MCF 10A (cell line): ENCODE measurements at regions of chr10 and their contacts with region 1.

Region 1: DNA sequence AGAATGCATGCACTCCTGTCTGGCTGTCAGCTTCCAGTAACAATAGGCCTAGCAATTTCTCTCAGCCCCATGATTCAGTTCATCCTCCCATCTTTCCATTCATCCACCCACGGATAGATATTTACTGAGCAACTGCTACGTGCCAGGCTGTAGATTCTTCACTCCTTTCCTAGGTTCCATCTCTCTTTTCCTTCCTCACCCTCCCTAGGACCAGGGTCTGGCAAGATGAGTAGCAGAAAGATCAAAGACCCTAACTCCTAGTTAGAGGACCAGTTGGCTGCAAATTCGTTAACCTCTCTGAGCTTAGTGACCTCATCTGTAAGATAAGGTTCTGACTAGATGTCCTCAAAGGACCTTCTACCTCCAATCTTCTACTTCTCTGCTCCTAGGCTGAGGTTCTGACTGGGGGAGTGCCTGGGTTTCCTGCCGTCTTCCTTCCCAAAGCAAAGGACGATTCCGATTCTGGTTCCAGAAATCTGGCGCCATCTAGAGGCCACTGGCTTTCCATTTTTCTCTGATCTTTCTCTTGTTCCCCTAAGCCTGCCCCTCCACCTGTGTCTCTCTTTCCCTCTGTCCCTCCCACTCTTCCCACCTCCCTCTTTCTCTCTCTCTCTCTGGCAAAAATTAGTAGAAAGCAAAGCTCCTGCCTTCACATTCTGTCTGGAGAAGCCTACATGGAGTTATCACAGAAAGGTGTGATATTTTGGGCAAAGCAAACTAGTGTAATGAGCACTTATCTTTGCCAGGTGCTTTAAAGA is 26.2 kb downstream of the TBATA start:
- DNase-seq: peak; percentile 82
- H3K4me3 Mint-ChIP-seq: no peak overlapping the region
- H3K27ac Mint-ChIP-seq: no peak overlapping the region
- H3K4me1 Mint-ChIP-seq: peaks cover 24% of the 10 kb centered on the region
- H3K27me3 Mint-ChIP-seq: no peaks in the 10 kb centered on the region
- CTCF ChIP-seq: peak; percentile 66

Region 2: DNA sequence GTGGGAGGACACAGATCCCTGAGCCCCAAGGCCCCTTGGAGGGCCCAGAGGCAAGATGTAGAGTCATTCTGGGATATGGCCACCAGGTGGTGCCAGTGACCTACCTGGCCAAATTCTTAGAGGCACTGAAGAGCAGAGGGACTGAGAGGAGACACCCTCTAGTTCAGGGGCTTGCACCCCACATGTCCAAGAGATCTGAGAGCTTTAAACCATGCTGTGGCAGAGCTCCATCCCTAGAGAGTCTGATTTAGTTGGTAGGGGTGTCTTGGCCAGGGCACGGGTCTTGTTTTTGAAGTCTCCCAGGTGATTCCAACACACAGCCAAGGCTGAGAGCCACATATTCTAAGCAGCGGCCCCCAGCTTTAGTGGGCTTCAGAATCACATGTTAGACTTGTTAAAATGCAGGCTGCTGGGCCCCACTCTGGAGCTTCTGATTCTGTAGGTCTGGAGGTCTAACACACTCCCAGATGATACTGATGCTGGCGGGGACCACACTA is 208.9 kb before region 1 on chr10:
- CTCF ChIA-PET with region 1: interaction called, 95 read pairs
- POLR2A ChIA-PET with region 1: interaction called, 3 read pairs
- intact Hi-C with region 1: loop called (anchors 1 kb)
- DNase-seq: peak; percentile 75
- H3K4me3 Mint-ChIP-seq: no peak overlapping the region
- H3K27ac Mint-ChIP-seq: no peak overlapping the region
- H3K4me1 Mint-ChIP-seq: no peaks in the 10 kb centered on the region
- H3K27me3 Mint-ChIP-seq: peaks cover 22% of the 10 kb centered on the region
- CTCF ChIP-seq: peak; percentile 87

Region 3: GRCh38 chr10:70619271-70620019 is 139.5 kb before region 1 on chr10:
- CTCF ChIA-PET with region 1: interaction called, 6 read pairs
- POLR2A ChIA-PET with region 1: no interaction called
- intact Hi-C with region 1: loop called (anchors 1 kb)
- DNase-seq: peak; percentile 54
- H3K4me3 Mint-ChIP-seq: no peak overlapping the region
- H3K27ac Mint-ChIP-seq: no peak overlapping the region
- H3K4me1 Mint-ChIP-seq: peaks cover 10% of the 10 kb centered on the region
- H3K27me3 Mint-ChIP-seq: no peaks in the 10 kb centered on the region
- CTCF ChIP-seq: peak; percentile 48

Region 4: GRCh38 chr10:70693619-70694335 is 65.2 kb before region 1 on chr10:
- CTCF ChIA-PET with region 1: interaction called, 5 read pairs
- POLR2A ChIA-PET with region 1: no interaction called
- intact Hi-C with region 1: loop called (anchors 10 kb)
- DNase-seq: no peak
- H3K4me3 Mint-ChIP-seq: no peak overlapping the region
- H3K27ac Mint-ChIP-seq: no peak overlapping the region
- H3K4me1 Mint-ChIP-seq: no peaks in the 10 kb centered on the region
- H3K27me3 Mint-ChIP-seq: peaks cover 14% of the 10 kb centered on the region
- CTCF ChIP-seq: no peak

Region 5: GRCh38 chr10:70880077-70880534 is 121.2 kb after region 1 on chr10:
- CTCF ChIA-PET with region 1: interaction called, 6 read pairs
- POLR2A ChIA-PET with region 1: no interaction called
- intact Hi-C with region 1: loop called (anchors 1 kb)
- DNase-seq: peak; percentile 82
- H3K4me3 Mint-ChIP-seq: no peak overlapping the region
- H3K27ac Mint-ChIP-seq: no peak overlapping the region
- H3K4me1 Mint-ChIP-seq: no peaks in the 10 kb centered on the region
- H3K27me3 Mint-ChIP-seq: no peaks in the 10 kb centered on the region
- CTCF ChIP-seq: peak; percentile 77